Panc1 (cell line): ENCODE measurements at regions of chr2 and their contacts with region 1.

Region 1: GRCh38 chr2:236932831-236933361 is 152.8 kb upstream of the COPS8 start:
- DNase-seq: no peak
- ATAC-seq: no peak
- H3K4me3 ChIP-seq: no peak overlapping the region
- H3K27ac ChIP-seq: no peak overlapping the region
- H3K4me1 ChIP-seq: no peaks in the 10 kb centered on the region
- H3K27me3 ChIP-seq: peaks cover 11% of the 10 kb centered on the region
- CTCF ChIP-seq: no peak

Region 2: GRCh38 chr2:236922061-236922460 is 10.8 kb before region 1 on chr2:
- CTCF ChIA-PET with region 1: no interaction called
- POLR2A ChIA-PET with region 1: interaction called, 11 read pairs
- in situ Hi-C with region 1: no loop called
- intact Hi-C with region 1: no loop called
- DNase-seq: no peak
- ATAC-seq: no peak
- H3K4me3 ChIP-seq: no peak overlapping the region
- H3K27ac ChIP-seq: no peak overlapping the region
- H3K4me1 ChIP-seq: no peaks in the 10 kb centered on the region
- H3K27me3 ChIP-seq: peaks cover 28% of the 10 kb centered on the region
- CTCF ChIP-seq: no peak